SK-N-SH (cell line): ENCODE measurements at regions of chr10 and their contacts with region 1.

Region 1: GRCh38 chr10:102669206-102670064 is 25.2 kb downstream of the TRIM8 start:
- DNase-seq: peak; percentile 76
- H3K4me3 ChIP-seq: no peak overlapping the region
- H3K27ac ChIP-seq: peak overlapping the region in 1 of 2 experiments; percentile 13; a peak in 1 of 4 replicates
- H3K4me1 ChIP-seq: peaks cover 17 to 40% of the 10 kb centered on the region in 2 experiments; a peak in 3 of 4 replicates
- H3K27me3 ChIP-seq: no peaks in the 10 kb centered on the region
- CTCF ChIP-seq: peak; percentile 65
- EP300 ChIP-seq: no peak
- RAD21 ChIP-seq: peak; percentile 13; the same call in 1 of the 2 replicates

Region 2: GRCh38 chr10:102503281-102504220 is 165.9 kb before region 1 on chr10 and contains the start of gene SUFU:
- CTCF ChIA-PET with region 1: interaction called, 19 read pairs
- POLR2A ChIA-PET with region 1: no interaction called
- DNase-seq: peak; percentile 98
- H3K4me3 ChIP-seq: peak within 1 kb of the TSS; percentile 85 to 98
- H3K27ac ChIP-seq: peak within 1 kb of the TSS; percentile 45 to 78; a peak in 3 of 4 replicates
- H3K4me1 ChIP-seq: peaks cover 8 to 15% of the 10 kb centered on the region in 2 experiments; a peak in 2 of 4 replicates
- H3K27me3 ChIP-seq: no peaks in the 10 kb centered on the region
- CTCF ChIP-seq: peak; percentile 88
- EP300 ChIP-seq: no peak; a peak in 1 of 4 replicates
- RAD21 ChIP-seq: peak; percentile 86
- polyA plus RNA-seq, gene SUFU: 4.6 and 5.7 TPM in 2 replicates

Region 3: DNA sequence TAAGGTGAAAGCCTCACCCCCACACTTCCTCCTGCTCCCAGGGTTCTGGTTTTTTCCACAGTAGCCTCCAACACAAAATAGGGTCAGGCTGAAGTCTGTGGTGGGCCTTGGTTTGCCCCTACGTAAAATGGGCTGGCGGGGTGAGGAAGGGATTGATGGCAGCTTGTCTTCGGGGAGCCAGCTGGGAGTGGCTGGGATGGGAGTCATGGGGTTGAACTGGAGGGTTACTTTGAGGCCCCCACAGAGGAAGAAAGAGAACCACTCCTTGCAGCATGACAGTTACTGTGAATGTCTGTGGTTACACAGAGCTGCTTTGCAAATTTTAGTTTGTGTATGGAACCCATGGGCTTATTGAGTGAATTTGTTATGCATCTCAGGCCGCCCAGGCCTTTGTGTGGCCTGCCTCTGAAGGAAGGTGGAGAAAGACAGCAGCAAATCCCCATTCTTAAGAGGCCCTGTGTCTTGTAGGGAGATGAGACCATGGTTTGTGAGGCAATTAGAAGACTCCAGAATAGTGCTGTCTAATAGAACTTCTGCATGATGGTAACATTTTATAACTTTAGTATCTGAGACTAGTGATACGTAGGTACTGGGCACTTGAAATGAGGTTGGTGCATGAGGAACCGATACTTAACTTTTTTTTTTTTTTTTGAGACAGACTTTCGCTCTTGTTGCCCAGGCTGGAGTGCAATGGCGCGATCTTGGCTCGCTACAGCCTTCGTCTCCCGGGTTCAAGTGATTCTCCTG is 17.1 kb before region 1 on chr10:
- CTCF ChIA-PET with region 1: interaction called, 56 read pairs
- POLR2A ChIA-PET with region 1: interaction called, 4 read pairs
- DNase-seq: no peak
- H3K4me3 ChIP-seq: no peak overlapping the region
- H3K27ac ChIP-seq: no peak overlapping the region
- H3K4me1 ChIP-seq: peaks cover 22 to 42% of the 10 kb centered on the region in 2 experiments; a peak in 3 of 4 replicates
- H3K27me3 ChIP-seq: no peaks in the 10 kb centered on the region
- CTCF ChIP-seq: no peak
- EP300 ChIP-seq: no peak
- RAD21 ChIP-seq: no peak

Region 4: GRCh38 chr10:102713814-102714620 is 44.6 kb after region 1 on chr10 and contains the start of gene ARL3:
- CTCF ChIA-PET with region 1: interaction called, 123 read pairs
- POLR2A ChIA-PET with region 1: interaction called, 11 read pairs
- DNase-seq: peak; percentile 98
- H3K4me3 ChIP-seq: peak within 1 kb of the TSS; percentile 87 to 91
- H3K27ac ChIP-seq: peak within 1 kb of the TSS; percentile 80 to 86
- H3K4me1 ChIP-seq: peaks cover 18 to 20% of the 10 kb centered on the region in 2 experiments; a peak in 3 of 4 replicates
- H3K27me3 ChIP-seq: no peaks in the 10 kb centered on the region
- CTCF ChIP-seq: no peak; the same call in none of the 2 replicates
- EP300 ChIP-seq: peak in 1 of 2 experiments; percentile 22; a peak in 1 of 4 replicates
- RAD21 ChIP-seq: no peak; the same call in 1 of the 2 replicates
- polyA plus RNA-seq, gene ARL3: 11.2 and 12.5 TPM in 2 replicates